ENCODE measurements at regions of chr14 and their contacts with region 1.

Region 1: GRCh38 chr14:70907176-70907995 is at the start of gene PCNX1:
- DNase-seq: peak; percentile 50 to 92
- H3K4me3 ChIP-seq: peak within 1 kb of the TSS; percentile 93
- H3K27ac ChIP-seq: peak within 1 kb of the TSS; percentile 96 to 99
- H3K4me1 ChIP-seq: peaks cover 13 to 26% of the 10 kb centered on the region in 2 donors
- H3K27me3 ChIP-seq: no peaks in the 10 kb centered on the region
- CTCF ChIP-seq: peak; percentile 79 to 95 (median 86)
- total RNA-seq, gene PCNX1: 73.1 TPM

Region 2: GRCh38 chr14:69766984-69767368 is 1140.4 kb before region 1 on chr14 and contains the start of gene SRSF5:
- intact Hi-C with region 1: loop called (anchors 5 kb)
- DNase-seq: peak; percentile 84 to 98
- H3K4me3 ChIP-seq: peak within 1 kb of the TSS; percentile 91 to 99
- H3K27ac ChIP-seq: peak within 1 kb of the TSS; percentile 100
- H3K4me1 ChIP-seq: peaks cover 19 to 32% of the 10 kb centered on the region in 2 donors
- H3K27me3 ChIP-seq: no peaks in the 10 kb centered on the region
- CTCF ChIP-seq: no peak
- total RNA-seq, gene SRSF5: 113 TPM

Region 3: GRCh38 chr14:70278281-70278680 is 629.1 kb before region 1 on chr14:
- intact Hi-C with region 1: no loop called
- DNase-seq: no peak
- H3K4me3 ChIP-seq: no peak overlapping the region
- H3K27ac ChIP-seq: no peak overlapping the region
- H3K4me1 ChIP-seq: no peaks in the 10 kb centered on the region
- H3K27me3 ChIP-seq: no peaks in the 10 kb centered on the region
- CTCF ChIP-seq: no peak

Region 4: GRCh38 chr14:70782361-70782760 is 125.0 kb before region 1 on chr14:
- intact Hi-C with region 1: no loop called
- DNase-seq: no peak
- H3K4me3 ChIP-seq: no peak overlapping the region
- H3K27ac ChIP-seq: no peak overlapping the region
- H3K4me1 ChIP-seq: no peaks in the 10 kb centered on the region
- H3K27me3 ChIP-seq: no peaks in the 10 kb centered on the region
- CTCF ChIP-seq: no peak

Region 5: DNA sequence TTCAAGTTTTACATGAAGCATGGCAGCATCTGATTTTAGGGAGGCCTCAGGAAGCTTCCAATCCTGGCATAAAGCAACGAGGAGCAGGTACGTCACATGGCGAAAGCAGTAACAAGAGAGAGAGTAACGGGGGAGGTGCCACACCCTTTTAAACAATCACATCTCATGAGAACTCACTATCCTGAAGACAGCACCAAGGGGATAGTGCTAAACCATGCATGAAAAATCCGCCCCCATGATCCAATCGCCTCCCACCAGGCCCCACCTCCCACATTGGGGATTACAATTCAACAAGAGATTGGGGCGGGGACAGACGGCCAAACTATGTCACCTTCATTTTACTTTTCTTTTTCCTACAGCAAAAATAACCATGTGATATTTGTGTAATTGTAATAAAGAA is 90.9 kb before region 1 on chr14:
- intact Hi-C with region 1: loop called (anchors 2 kb)
- DNase-seq: peak in 1 of 2 donors; percentile 50
- H3K4me3 ChIP-seq: no peak overlapping the region
- H3K27ac ChIP-seq: no peak overlapping the region
- H3K4me1 ChIP-seq: peaks cover 0 to 5% of the 10 kb centered on the region in 2 donors
- H3K27me3 ChIP-seq: no peaks in the 10 kb centered on the region
- CTCF ChIP-seq: no peak

Region 6: DNA sequence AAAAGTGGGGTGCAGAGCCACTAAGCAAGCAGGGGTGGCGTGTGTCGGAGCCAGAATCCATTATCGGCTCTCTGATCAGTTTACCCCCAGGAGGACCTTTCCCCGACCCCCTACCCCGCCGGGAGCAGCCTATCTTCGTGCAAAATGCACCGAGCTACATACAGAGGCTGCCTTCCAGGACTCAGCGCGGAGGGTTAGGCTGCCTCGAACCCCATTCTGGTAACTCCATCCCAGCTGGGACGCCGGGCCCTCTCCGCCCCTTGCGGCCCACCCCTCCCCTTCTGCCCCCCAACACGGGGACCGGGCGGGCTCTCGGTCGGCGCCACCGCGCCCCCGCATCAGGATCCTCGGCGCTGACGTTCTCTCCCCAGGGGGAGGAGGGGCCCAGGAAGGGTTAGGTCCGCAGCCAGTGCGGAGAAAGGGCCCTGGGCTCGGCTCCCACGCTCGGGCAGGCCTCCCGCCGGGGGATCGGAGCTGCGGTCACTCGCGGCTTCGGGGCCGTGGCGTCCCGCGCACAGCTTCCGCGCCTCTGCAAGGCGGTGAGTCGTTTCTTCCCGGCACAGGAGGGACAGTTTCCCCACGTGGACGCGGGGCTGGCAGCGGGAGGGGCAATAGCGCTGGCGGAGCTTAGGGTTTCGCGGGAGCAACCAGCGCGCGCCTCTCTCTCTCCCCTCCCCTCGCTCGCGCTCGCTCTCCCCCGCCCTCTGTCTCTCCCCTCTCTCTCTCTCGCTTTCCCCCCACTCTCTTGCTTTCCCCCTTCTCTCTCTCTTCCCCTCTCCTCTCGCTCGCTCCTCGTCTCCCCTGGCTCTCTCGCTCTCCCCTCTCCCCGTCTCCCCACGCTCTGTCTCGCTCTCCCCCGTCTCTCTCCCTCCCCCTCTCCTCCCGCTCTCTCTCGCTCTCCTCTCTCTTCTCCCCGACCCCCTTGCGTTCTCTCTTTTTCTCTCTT is 85.5 kb before region 1 on chr14:
- intact Hi-C with region 1: loop called (anchors 1 kb)
- DNase-seq: peak in 1 of 2 donors; percentile 74
- H3K4me3 ChIP-seq: peak overlapping the region; percentile 84 to 86
- H3K27ac ChIP-seq: no peak overlapping the region
- H3K4me1 ChIP-seq: peaks cover 0 to 11% of the 10 kb centered on the region in 2 donors
- H3K27me3 ChIP-seq: no peaks in the 10 kb centered on the region
- CTCF ChIP-seq: no peak

Region 7: DNA sequence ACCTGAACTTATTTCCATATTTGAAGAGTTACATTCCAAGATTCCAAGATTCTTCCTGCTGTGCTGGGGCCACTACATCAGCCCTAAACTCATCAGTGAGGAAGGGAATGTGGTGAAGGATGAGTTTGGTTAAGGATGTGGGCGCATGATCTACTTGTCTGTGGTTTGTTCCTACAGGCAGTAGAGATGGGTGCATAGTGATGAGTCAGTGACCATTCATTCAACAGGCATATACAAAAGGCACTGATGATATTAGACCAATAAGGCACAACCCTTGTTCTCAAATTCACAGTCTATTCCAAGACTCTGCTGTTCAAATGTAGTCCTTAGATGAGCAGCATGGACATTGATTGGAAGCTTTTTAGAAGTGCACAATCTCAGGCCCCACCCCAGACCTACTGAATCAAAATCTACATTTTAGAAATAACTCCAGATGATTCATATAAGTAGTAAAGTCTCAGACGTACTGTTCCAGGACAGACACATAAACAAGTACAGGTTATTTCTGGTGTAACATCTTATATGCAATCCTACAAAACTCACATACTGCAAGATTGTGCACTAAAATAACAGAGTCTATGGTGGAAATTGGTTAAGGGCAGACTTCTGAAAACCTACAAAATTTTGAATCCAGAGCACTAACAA is 50.4 kb before region 1 on chr14:
- intact Hi-C with region 1: no loop called
- DNase-seq: no peak
- H3K4me3 ChIP-seq: no peak overlapping the region
- H3K27ac ChIP-seq: no peak overlapping the region
- H3K4me1 ChIP-seq: no peaks in the 10 kb centered on the region
- H3K27me3 ChIP-seq: no peaks in the 10 kb centered on the region
- CTCF ChIP-seq: no peak

Region 8: GRCh38 chr14:70972107-70972976 is 65.0 kb after region 1 on chr14:
- intact Hi-C with region 1: loop called (anchors 1 kb)
- DNase-seq: peak in 1 of 2 donors; percentile 93
- H3K4me3 ChIP-seq: no peak overlapping the region
- H3K27ac ChIP-seq: no peak overlapping the region
- H3K4me1 ChIP-seq: no peaks in the 10 kb centered on the region
- H3K27me3 ChIP-seq: no peaks in the 10 kb centered on the region
- CTCF ChIP-seq: peak; percentile 64 to 90 (median 88)